ENCODE measurements at regions of chr22 and their contacts with region 1.

Region 1: DNA sequence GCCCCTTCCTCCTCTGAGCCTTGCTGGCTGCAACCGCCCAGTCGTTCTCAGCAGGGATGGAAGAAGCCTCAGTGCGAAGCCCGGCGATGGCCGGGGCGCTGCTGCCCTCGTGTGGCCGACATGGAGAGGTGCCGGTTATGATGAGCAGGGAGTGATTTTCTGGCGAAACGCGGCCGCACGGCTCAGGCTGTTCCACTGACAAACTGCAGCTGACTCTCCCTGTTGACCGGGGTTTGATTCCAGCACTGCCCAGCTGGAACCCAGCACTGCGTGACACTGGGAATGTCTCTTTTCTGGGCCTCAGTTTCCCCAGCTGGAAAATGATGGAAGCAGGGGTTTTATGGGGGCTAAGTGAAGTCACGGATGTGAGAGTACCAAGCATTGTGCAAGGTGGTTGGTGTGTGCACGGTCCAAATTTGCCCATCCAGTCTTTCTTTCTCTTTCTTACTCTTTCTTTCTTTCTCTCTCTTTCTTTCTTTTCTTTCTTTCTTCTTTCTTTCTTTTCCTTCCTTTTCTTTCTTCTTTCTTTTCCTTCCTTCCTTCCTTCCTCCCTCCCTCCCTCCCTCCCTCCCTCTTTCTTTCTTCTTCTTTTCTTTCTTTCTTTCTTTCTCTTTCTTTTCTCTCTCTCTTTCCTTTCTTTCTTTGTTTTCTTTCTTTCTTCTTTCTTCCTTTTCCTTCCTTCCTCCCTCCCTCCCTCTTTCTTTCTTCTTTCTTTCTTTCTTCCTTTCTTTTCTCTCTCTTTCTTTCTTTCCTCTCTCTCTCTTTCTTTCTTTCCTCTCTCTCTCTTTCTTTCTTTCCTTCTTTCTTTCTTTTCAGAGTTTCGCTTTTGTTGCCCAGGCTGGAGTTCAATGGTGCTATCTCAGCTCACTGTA is 25.8 kb upstream of the MPPED1 start:
- DNase-seq: peak; percentile 89
- H3K4me3 ChIP-seq: peak overlapping the region in 1 of 2 donors; percentile 1
- H3K27ac ChIP-seq: no peak overlapping the region
- H3K4me1 ChIP-seq: peaks cover 8% of the 10 kb centered on the region
- H3K27me3 ChIP-seq: no peaks in the 10 kb centered on the region
- CTCF ChIP-seq: peak; percentile 84 to 95 (median 85)
- POLR2A ChIP-seq: no peak

Region 2: DNA sequence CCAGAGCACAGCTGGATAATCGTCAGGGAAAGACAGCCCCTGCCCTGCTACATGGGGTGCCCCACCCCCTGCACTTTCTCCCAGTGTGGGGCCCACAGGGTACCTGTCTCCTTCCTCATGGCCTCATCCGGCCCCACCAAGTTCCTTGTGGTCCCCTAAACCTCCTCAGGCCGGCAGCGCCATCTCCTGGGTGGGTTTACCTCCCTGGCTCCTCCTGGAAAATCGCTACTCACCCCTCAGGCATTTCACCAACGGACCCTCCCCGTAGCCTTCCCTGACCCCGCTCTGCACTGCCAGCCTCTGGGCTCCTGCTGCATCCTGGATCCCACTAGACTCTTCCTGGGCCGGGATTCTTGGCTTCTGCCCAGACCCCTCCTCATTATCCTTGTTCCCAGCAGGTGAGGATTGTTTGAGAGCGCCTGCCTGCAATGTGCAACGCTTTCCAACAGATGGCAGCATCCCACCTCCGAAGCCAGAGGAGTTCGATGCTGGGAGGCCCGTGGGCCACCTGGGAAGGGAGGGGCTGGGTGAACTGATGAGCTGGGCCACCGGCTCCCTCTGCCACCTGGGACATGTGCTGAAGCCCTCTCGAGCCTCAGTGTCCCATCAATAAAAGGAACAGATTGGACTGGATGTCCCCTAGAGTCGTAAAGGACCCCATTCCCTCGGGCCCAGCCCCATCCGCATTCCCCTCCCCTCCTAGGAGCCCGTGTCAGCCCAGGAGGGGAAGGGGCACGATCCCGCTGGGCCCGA is 154.9 kb before region 1 on chr22:
- intact Hi-C with region 1: loop called (anchors 10 kb)
- DNase-seq: peak; percentile 75
- H3K4me3 ChIP-seq: no peak overlapping the region
- H3K27ac ChIP-seq: no peak overlapping the region
- H3K4me1 ChIP-seq: peaks cover 31% of the 10 kb centered on the region
- H3K27me3 ChIP-seq: no peaks in the 10 kb centered on the region
- CTCF ChIP-seq: peak; percentile 74 to 91 (median 77)
- POLR2A ChIP-seq: no peak

Region 3: GRCh38 chr22:43263645-43264514 is 122.1 kb before region 1 on chr22:
- intact Hi-C with region 1: no loop called
- DNase-seq: peak; percentile 50
- H3K4me3 ChIP-seq: no peak overlapping the region
- H3K27ac ChIP-seq: peak overlapping the region in 1 of 2 donors; percentile 5
- H3K4me1 ChIP-seq: peaks cover 39% of the 10 kb centered on the region
- H3K27me3 ChIP-seq: no peaks in the 10 kb centered on the region
- CTCF ChIP-seq: no peak
- POLR2A ChIP-seq: no peak

Region 4: GRCh38 chr22:43273902-43274484 is 112.0 kb before region 1 on chr22:
- intact Hi-C with region 1: loop called (anchors 10 kb)
- DNase-seq: peak; percentile 67
- H3K4me3 ChIP-seq: no peak overlapping the region
- H3K27ac ChIP-seq: no peak overlapping the region
- H3K4me1 ChIP-seq: peaks cover 14% of the 10 kb centered on the region
- H3K27me3 ChIP-seq: no peaks in the 10 kb centered on the region
- CTCF ChIP-seq: peak; percentile 70 to 80 (median 78)
- POLR2A ChIP-seq: no peak